Right ventricle myocardium inferior (tissue), 1 donor: ENCODE measurements at regions of chr1 and their contacts with region 1.

Region 1: GRCh38 chr1:89833183-89834082 is 12.6 kb downstream of the LRRC8D start:
- DNase-seq: no peak
- ATAC-seq: no peak

Region 2: GRCh38 chr1:89804642-89805237 is 28.7 kb before region 1 on chr1:
- intact Hi-C with region 1: loop called (anchors 2 kb)
- DNase-seq: peak; percentile 85
- ATAC-seq: peak; percentile 89

Region 3: DNA sequence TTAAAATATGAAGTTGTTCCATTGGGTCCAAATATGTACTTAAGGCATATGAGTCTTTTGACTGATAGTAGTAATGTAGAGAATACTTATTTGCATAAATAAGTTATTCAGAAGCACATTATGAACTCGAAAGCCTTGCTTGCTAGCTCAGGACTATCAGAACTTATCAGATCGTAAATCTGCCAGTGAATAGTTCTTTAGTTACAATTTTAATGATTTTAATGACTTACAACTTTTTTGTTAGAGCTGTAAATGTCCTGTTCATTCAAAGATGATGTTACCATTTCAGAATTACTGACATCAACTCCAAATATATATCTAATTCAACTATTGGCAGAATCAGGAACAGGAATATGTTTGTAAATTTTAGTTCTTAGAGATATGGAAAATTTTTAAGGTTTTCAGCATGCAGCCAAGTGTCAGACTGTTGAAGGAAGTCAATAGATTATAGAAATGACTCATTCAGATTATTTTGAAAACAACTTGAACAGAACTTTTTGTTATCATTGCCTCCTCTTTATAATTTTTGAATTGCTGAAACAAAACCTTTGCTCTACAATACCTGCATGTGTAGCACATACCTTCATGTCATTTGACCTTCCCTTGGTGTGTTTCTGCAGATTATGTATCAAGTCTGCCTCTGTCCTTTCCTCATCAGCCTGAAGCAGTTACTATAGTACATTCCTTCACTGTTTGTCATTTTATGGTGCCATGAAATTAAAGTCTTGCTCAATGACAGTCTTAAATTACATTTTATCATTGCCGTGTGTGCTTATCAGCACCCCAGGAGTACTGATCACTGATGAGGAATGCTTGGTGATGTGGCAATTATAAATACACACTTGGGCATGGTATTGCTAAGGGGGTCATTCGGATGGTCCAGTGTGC is 32.3 kb after region 1 on chr1:
- intact Hi-C with region 1: no loop called
- DNase-seq: no peak
- ATAC-seq: peak; percentile 46